OCI-LY7 (cell line): ENCODE measurements at regions of chr3 and their contacts with region 1.

Region 1: GRCh38 chr3:143001369-143002082 is at the start of gene U2SURP:
- DNase-seq: peak; percentile 96
- H3K4me3 ChIP-seq: peak within 1 kb of the TSS; percentile 100
- H3K27ac ChIP-seq: peak within 1 kb of the TSS; percentile 82
- H3K4me1 ChIP-seq: peaks cover 25% of the 10 kb centered on the region
- CTCF ChIP-seq: no peak
- total RNA-seq, gene U2SURP: 108 and 115 TPM in 2 replicates

Region 2: GRCh38 chr3:142028243-142028777 is 973.2 kb before region 1 on chr3:
- CTCF ChIA-PET with region 1: no interaction called
- POLR2A ChIA-PET with region 1: no interaction called
- intact Hi-C with region 1: loop called (anchors 10 kb)
- DNase-seq: peak; percentile 92
- H3K4me3 ChIP-seq: peak overlapping the region; percentile 84
- H3K27ac ChIP-seq: peak overlapping the region; percentile 80
- H3K4me1 ChIP-seq: peaks cover 57% of the 10 kb centered on the region
- CTCF ChIP-seq: no peak

Region 3: DNA sequence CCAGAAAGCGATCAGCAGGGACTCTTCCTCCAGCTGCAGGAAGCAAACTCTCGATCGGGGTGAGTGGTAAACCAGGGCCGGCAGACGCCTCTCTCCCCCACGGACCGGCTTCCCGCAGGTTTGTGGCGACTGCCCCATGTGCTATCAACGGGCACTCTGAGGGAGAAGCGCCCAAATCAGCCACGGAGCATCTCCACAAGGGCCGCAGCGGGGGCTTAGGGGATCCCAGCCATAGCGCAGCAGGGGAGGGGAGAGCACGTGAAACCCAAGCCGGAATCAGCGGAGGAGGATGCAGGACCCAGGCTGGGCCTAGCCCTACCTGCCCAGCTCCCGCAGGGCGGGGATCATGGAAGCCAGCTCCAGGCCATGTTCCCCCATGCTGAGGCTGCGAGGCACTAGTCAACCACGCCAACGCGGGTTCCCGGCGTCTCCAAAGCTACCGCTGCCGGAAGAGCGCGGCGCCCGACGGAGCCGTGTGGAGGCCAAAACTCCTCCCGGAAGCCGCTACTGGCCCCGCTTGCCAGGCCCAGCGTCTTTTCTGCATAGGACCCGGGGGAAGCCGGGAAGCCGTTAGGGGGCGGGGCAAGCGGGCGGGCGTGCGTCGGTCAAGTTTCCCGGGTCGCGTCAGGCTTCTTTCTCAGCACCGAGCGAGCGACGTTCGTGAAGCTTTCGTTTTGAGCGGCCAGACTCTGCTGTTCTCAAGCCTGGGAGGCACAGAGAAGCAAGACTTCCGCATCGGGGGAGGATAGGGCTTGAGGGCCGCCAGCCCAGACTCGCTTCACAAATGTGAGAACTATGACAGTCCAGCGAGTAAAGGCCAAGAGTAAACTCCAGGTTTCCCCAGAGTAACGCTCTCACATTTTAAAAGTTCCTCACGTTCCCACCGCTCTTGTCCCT is 423.0 kb before region 1 on chr3 and contains the start of gene ATR:
- CTCF ChIA-PET with region 1: no interaction called
- POLR2A ChIA-PET with region 1: interaction called, 13 read pairs
- intact Hi-C with region 1: loop called (anchors 2 kb)
- DNase-seq: peak; percentile 97
- H3K4me3 ChIP-seq: peak within 1 kb of the TSS; percentile 97
- H3K27ac ChIP-seq: peak within 1 kb of the TSS; percentile 71
- H3K4me1 ChIP-seq: peaks cover 38% of the 10 kb centered on the region
- CTCF ChIP-seq: no peak
- total RNA-seq, gene ATR: 26.8 and 27.1 TPM in 2 replicates

Region 4: DNA sequence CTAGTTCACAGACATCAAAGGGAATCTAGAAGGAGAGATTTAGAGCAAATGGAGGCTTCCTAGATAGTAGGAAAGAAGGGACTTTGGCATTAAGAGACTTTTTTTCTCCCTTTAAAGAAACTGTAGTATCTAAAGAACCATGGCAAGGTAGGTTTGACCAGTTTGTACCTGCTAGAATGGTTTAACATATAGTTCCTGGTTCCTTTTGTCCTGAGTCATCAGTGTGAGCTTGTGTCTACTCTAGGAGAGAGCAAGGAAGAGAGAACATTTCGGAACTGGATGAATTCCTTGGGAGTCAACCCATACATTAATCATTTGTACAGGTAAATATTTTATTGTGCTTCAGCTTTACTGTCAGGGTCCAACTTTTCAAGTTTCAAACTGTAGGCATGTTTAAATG is 307.3 kb before region 1 on chr3:
- CTCF ChIA-PET with region 1: no interaction called
- POLR2A ChIA-PET with region 1: no interaction called
- intact Hi-C with region 1: no loop called
- DNase-seq: no peak
- H3K4me3 ChIP-seq: no peak overlapping the region
- H3K27ac ChIP-seq: no peak overlapping the region
- H3K4me1 ChIP-seq: no peaks in the 10 kb centered on the region
- CTCF ChIP-seq: no peak

Region 5: GRCh38 chr3:143011705-143012104 is 10.2 kb after region 1 on chr3:
- CTCF ChIA-PET with region 1: no interaction called
- POLR2A ChIA-PET with region 1: interaction called, 37 read pairs
- intact Hi-C with region 1: no loop called
- DNase-seq: no peak
- H3K4me3 ChIP-seq: no peak overlapping the region
- H3K27ac ChIP-seq: no peak overlapping the region
- H3K4me1 ChIP-seq: peaks cover 16% of the 10 kb centered on the region
- CTCF ChIP-seq: no peak

Region 6: GRCh38 chr3:143226678-143227291 is 225.3 kb after region 1 on chr3:
- CTCF ChIA-PET with region 1: no interaction called
- POLR2A ChIA-PET with region 1: no interaction called
- intact Hi-C with region 1: no loop called
- DNase-seq: no peak
- H3K4me3 ChIP-seq: no peak overlapping the region
- H3K27ac ChIP-seq: no peak overlapping the region
- H3K4me1 ChIP-seq: peaks cover 1% of the 10 kb centered on the region
- CTCF ChIP-seq: no peak

Region 7: GRCh38 chr3:143847787-143848631 is 846.5 kb after region 1 on chr3 and contains the start of gene SLC9A9:
- CTCF ChIA-PET with region 1: no interaction called
- POLR2A ChIA-PET with region 1: interaction called, 3 read pairs
- intact Hi-C with region 1: loop called (anchors 10 kb)
- DNase-seq: peak; percentile 75
- H3K4me3 ChIP-seq: peak within 1 kb of the TSS; percentile 78
- H3K27ac ChIP-seq: peak within 1 kb of the TSS; percentile 8
- H3K4me1 ChIP-seq: peaks cover 22% of the 10 kb centered on the region
- CTCF ChIP-seq: no peak
- total RNA-seq, gene SLC9A9: 7.7 and 14.8 TPM in 2 replicates